Calu3 (cell line): ENCODE measurements at regions of chr5 and their contacts with region 1.

Region 1: DNA sequence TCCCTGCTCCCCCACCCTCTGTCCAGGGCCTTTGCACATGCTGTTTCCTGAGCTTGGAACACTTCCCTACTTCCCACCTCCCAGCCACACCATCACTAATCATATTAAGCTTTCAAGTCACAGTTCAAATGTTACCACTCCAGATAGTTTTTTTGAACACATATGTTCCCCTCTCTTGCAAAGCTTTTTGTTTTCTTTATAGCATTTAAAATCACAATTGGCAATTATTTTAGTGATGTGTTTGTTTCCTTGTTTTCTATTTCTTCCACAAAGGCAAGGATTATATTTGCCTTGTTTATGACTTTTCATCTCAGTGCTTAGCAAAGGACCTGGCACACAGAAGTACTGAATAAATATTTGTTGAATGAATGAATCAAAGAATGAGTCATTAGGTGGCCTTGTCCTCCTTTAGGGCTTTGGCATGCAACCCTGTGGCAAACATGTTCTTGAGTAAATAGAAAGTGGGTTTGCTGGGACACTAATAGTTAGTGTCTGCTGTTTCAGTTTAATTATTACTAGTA is 386.8 kb downstream of the FGF10 start:
- DNase-seq: peak; percentile 61
- H3K4me3 Mint-ChIP-seq: peak overlapping the region; percentile 18
- H3K27ac Mint-ChIP-seq: peak overlapping the region; percentile 91
- H3K4me1 Mint-ChIP-seq: peaks cover 53% of the 10 kb centered on the region
- H3K27me3 Mint-ChIP-seq: no peaks in the 10 kb centered on the region
- CTCF ChIP-seq: no peak

Region 2: DNA sequence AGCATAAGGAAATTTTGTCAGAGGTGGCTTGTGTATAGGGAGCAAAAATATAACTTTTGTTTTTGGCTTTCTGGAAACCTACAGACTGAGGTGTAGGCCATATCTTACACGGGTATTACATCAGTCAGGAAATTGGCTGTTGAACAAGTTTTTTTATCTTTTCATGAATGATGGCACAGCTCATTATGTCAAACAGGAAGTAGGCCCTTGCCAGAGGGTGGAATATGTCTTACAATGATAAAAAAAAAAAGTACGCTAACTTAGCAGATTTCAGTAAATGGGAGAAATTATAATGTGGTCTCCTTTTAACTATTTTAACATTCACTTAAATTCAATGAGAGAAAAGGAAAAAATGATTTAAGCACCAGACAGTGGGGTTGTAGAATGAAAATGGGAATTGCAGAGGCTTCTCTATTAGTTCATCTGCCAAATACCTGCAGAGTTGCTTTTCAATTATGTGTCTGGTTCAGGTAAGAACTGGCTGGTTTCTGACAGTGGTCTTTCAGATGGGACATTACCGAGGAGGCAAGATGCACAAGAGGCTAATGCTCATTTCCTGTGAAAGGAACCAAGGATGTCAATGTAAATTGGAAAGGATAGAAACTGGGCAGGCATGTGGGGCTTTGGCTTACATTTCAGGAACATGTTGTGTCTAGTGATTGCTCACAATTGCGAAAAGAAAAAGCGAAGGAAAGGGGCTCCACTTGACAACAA is 229.5 kb before region 1 on chr5:
- CTCF ChIA-PET with region 1: no interaction called
- intact Hi-C with region 1: loop called (anchors 1 kb)
- DNase-seq: peak; percentile 10
- H3K4me3 Mint-ChIP-seq: no peak overlapping the region
- H3K27ac Mint-ChIP-seq: peak overlapping the region; percentile 100
- H3K4me1 Mint-ChIP-seq: peaks cover 26% of the 10 kb centered on the region
- H3K27me3 Mint-ChIP-seq: no peaks in the 10 kb centered on the region
- CTCF ChIP-seq: no peak

Region 3: DNA sequence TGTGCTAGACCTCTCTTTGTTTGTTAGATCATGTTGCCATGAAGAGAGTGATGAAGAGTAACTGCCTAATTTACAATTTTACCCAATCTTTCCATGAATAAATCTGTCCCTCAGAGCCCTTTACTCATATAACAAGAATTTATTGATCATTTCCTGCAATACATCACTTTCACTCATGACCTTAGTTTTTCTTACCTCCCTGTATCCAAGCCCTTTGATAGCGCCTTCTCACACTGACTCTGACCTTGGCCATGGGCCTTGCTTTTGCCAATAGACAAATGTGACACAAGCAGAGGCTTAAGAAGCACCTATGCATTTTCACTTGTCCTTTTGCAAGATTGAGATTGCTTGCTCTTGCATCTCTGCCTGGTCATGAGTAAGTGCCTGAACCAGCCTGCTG is 111.3 kb before region 1 on chr5:
- CTCF ChIA-PET with region 1: no interaction called
- intact Hi-C with region 1: loop called (anchors 5 kb)
- DNase-seq: peak; percentile 14
- H3K4me3 Mint-ChIP-seq: no peak overlapping the region
- H3K27ac Mint-ChIP-seq: no peak overlapping the region
- H3K4me1 Mint-ChIP-seq: peaks cover 21% of the 10 kb centered on the region
- H3K27me3 Mint-ChIP-seq: no peaks in the 10 kb centered on the region
- CTCF ChIP-seq: no peak